Posterior cingulate gyrus (tissue), 11 donors: ENCODE measurements at regions of chr13 and their contacts with region 1.

Region 1: DNA sequence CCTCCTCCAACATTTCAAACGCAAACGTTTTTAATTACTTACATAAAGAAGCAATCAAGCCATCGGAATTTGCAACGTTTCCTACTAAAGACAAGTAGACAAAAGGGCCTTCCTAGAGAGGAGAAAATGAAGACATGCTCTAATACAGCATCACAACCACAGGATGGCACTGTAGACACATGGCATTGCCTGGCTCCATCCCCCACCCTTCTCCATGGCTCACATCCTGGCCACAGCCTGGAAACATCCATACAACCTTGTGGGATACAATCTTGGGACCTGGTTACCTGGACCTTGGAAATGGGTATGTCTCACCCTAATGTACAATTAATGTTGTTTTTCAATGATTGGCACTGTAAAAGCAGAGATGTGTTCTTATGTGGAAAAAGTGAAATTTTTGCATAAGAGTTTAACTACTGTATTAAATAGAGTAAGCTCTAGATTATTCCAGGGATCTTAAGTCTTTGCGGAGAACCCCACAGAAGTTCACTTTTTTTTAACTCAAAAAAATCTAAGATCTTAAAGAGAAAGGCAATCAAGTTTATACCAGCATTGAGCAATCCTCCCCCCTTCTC is 21.5 kb downstream of the EBPL start:
- DNase-seq: peak in 9 of 10 donors; percentile 26 to 93 (median 68)

Region 2: GRCh38 chr13:49733181-49733951 is 63.5 kb after region 1 on chr13:
- intact Hi-C with region 1: no loop called
- DNase-seq: no peak

Region 3: DNA sequence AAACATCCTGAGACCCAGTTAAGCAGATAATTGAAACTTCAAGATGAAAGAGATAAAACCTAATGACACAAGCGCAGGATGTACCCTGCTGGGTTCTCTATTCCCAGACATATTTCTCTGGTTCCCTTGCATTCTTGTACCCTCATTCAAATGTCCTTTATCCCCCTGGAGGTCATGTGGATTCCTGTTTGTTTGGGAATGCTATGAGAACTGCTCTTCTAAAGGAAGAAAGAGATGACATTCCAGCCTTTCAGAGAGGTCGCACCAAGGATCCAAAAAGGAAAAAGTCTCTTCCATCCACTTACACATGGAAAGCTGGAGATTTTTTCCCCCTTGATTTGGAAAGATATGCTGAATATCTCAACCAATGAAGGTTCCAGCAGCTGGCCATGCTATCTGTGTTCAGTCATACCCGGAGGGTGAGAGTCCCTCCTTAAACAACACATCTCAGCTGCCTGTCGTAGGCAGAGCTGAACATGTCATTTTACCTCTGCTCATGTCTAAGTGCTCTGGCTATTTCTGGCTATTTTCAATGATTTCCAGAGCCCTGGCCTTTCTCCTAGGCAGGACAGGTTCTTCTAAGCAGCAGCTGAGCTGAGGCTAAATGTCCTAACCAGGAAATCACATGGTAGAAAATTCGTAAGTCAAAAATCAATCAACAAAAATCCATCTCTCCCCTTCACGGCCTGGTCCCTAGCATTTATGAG is 1388.8 kb after region 1 on chr13:
- intact Hi-C with region 1: loop called (anchors 10 kb)
- DNase-seq: no peak